GM12878 (cell line): ENCODE measurements at regions of chr11 and their contacts with region 1.

Region 1: GRCh38 chr11:122317305-122317704 is 201.3 kb upstream of the BLID start:
- DNase-seq: no peak
- ATAC-seq: no peak
- H3K4me3 ChIP-seq: no peak overlapping the region
- H3K27ac ChIP-seq: no peak overlapping the region
- H3K4me1 ChIP-seq: no peaks in the 10 kb centered on the region
- H3K27me3 ChIP-seq: no peaks in the 10 kb centered on the region
- CTCF ChIP-seq: no peak
- EP300 ChIP-seq: no peak
- POLR2A ChIP-seq: no peak
- RAD21 ChIP-seq: no peak

Region 2: GRCh38 chr11:122344274-122344673 is 27.0 kb after region 1 on chr11:
- CTCF ChIA-PET with region 1: no interaction called
- POLR2A ChIA-PET with region 1: no interaction called
- RAD21 ChIA-PET with region 1: no interaction called
- SMC1A ChIA-PET with region 1: no interaction called
- in situ Hi-C with region 1: no loop called
- intact Hi-C with region 1: no loop called
- DNase-seq: no peak
- ATAC-seq: no peak
- H3K4me3 ChIP-seq: no peak overlapping the region
- H3K27ac ChIP-seq: no peak overlapping the region
- H3K4me1 ChIP-seq: no peaks in the 10 kb centered on the region
- H3K27me3 ChIP-seq: no peaks in the 10 kb centered on the region
- CTCF ChIP-seq: no peak
- EP300 ChIP-seq: no peak
- POLR2A ChIP-seq: no peak
- RAD21 ChIP-seq: no peak

Region 3: DNA sequence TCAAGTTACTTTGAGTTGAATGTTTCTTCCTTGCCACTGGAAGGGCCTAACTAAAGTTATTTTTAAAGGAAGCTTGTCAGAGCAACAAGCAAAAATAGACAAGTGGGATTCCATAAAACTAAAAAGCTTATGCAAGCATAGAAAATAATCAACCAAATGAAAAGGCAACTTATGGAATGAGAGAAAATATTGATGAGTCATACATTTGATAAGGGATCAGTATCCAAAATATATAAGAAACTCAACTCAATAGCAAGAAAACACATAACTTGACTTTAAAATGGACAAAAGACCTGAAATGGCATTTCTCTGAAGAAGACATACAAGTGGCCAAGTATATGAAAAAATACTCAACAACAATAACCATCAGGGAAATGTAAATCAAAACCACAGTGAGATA is 73.7 kb after region 1 on chr11:
- CTCF ChIA-PET with region 1: no interaction called
- POLR2A ChIA-PET with region 1: interaction called, 10 read pairs
- RAD21 ChIA-PET with region 1: no interaction called
- SMC1A ChIA-PET with region 1: no interaction called
- in situ Hi-C with region 1: no loop called
- intact Hi-C with region 1: no loop called
- DNase-seq: no peak
- ATAC-seq: no peak
- H3K4me3 ChIP-seq: no peak overlapping the region
- H3K27ac ChIP-seq: no peak overlapping the region
- H3K4me1 ChIP-seq: no peaks in the 10 kb centered on the region
- H3K27me3 ChIP-seq: no peaks in the 10 kb centered on the region
- CTCF ChIP-seq: no peak
- EP300 ChIP-seq: no peak
- POLR2A ChIP-seq: no peak
- RAD21 ChIP-seq: no peak